CD4-positive, alpha-beta T cell (primary cell): ENCODE measurements at regions of chr19 and their contacts with region 1.

Region 1: DNA sequence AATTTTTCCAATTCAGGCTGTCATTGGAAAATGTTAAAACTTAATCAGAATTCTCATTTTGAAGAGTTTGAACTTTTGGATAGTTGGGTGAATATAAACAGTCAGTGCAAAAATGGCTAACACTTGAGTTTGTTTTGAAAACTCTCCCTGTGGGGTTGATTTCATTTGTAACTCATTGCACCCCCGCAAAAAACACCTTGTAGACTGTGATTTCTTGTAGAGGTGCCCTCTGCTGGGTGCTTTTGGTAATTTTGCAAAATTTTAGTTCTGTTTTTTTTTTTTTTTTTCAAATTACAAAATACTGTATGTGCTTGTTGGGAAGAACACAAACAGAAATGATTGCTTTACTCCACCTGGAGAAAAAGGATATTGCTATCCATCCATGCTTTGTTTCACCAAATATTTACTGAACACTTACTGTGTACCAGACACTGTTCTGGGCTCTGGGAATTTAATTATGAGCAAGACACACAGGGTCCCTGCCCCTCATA is 28.2 kb upstream of the GPI start:
- DNase-seq: peak in 12 of 14 experiments; percentile 16 to 79 (median 42)
- ATAC-seq: peak; percentile 76
- H3K4me3 ChIP-seq: no peak overlapping the region
- H3K4me3 Mint-ChIP-seq: no peak overlapping the region
- H3K27ac ChIP-seq: no peak overlapping the region
- H3K27ac Mint-ChIP-seq: peak overlapping the region; percentile 74
- H3K4me1 ChIP-seq: peaks cover 5% of the 10 kb centered on the region
- H3K4me1 Mint-ChIP-seq: peaks cover 13% of the 10 kb centered on the region
- H3K27me3 ChIP-seq: no peaks in the 10 kb centered on the region
- H3K27me3 Mint-ChIP-seq: no peaks in the 10 kb centered on the region
- CTCF ChIP-seq: peak; percentile 78

Region 2: DNA sequence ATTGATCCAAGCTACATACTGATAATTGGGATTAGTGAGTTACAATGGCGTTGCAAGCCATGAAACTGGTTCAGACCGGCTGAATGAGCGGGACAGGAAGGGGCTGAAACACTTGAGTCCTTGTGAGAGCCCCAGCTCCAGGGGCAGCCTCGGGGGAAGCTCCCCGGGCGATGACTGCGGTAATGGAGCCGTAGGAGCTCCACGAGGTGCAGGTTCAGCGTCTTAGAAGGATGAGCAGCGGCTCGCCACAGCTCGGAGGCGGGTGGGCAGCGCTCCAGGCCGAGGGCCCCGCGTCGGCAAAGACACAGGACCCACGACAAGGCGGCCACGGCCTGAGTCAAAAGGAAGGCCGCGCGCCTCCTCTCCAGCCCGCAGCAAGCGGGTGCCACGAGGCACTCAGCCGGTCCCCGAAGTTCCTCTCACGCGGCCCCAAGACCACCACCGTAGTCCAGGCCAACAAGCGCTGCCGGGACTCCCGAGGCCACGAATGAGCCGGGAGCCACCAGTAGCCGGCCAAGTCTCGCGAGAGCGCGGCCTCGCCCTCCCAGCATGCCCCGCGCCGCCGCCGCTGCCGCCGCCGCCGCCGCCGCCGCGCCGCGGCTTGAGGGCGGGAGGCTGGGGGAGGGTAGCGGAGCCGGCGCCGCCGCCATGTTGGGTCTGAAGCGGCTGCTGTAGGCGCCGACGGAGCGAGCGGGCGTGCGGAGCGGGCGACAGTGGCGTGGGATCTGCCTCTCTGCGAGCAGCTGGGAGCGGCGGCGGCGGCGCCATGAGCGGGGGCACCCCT is 164.8 kb before region 1 on chr19 and contains the start of gene LSM14A:
- CTCF ChIA-PET with region 1: no interaction called
- POLR2A ChIA-PET with region 1: interaction called, 11 read pairs
- intact Hi-C with region 1: loop called (anchors 2 to 5 kb)
- DNase-seq: peak; percentile 84 to 97 (median 91)
- ATAC-seq: peak; percentile 85
- H3K4me3 ChIP-seq: peak within 1 kb of the TSS; percentile 95
- H3K4me3 Mint-ChIP-seq: peak within 1 kb of the TSS; percentile 99
- H3K27ac ChIP-seq: peak within 1 kb of the TSS; percentile 97 to 98
- H3K27ac Mint-ChIP-seq: peak within 1 kb of the TSS; percentile 97
- H3K4me1 ChIP-seq: peaks cover 40% of the 10 kb centered on the region
- H3K4me1 Mint-ChIP-seq: peaks cover 50% of the 10 kb centered on the region
- H3K27me3 ChIP-seq: no peaks in the 10 kb centered on the region
- H3K27me3 Mint-ChIP-seq: no peaks in the 10 kb centered on the region
- CTCF ChIP-seq: no peak
- total RNA-seq, gene LSM14A: 210 to 217 TPM

Region 3: GRCh38 chr19:34220472-34221063 is 116.3 kb before region 1 on chr19:
- CTCF ChIA-PET with region 1: no interaction called
- POLR2A ChIA-PET with region 1: no interaction called
- intact Hi-C with region 1: loop called in 1 of 2 experiments (anchors 2 kb)
- DNase-seq: peak; percentile 38 to 79 (median 51)
- ATAC-seq: no peak
- H3K4me3 ChIP-seq: no peak overlapping the region
- H3K4me3 Mint-ChIP-seq: no peak overlapping the region
- H3K27ac ChIP-seq: no peak overlapping the region
- H3K27ac Mint-ChIP-seq: peak overlapping the region; percentile 28
- H3K4me1 ChIP-seq: peaks cover 39% of the 10 kb centered on the region
- H3K4me1 Mint-ChIP-seq: peaks cover 61% of the 10 kb centered on the region
- H3K27me3 ChIP-seq: no peaks in the 10 kb centered on the region
- H3K27me3 Mint-ChIP-seq: no peaks in the 10 kb centered on the region
- CTCF ChIP-seq: peak; percentile 74

Region 4: DNA sequence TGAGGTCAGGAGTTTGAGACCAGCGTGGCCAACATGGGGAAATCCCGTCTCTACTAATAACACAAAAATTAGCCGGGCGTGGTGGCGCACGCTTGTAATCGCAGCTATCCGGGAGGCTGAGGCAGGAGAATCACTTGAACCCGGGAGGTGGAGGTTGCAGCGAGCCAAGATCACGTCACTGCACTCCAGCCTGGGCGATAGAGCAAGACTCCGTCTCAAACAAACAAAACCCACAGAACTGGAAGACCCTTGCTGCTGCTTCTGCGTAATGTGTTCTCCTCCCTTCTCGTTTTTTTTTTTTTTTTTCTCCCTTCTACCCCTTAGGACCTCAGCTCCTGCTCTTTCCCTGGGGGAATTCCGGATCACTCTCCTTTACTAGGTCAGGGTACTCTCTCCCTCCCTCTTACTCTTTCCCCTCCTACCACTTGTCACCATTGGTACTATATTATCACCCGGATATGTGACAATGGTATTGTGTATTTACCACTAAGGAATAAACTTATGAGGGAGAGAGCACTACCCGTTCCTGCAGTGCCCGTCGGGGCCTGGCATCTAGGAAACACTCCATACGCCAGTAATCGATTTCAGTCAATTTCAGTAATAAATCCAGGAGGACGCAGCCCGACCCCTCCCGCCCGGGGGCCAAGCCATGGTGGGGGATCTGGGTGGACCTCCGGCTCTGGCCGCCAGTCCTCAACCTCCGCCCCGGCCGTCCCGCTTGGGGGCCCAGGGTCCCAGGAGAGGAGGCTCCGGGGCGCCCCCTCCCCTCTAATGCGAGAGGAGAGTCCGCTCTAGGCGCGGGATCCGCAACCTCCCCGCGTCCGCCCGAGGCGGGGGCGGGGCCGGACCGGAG is 82.9 kb before region 1 on chr19:
- CTCF ChIA-PET with region 1: no interaction called
- POLR2A ChIA-PET with region 1: no interaction called
- intact Hi-C with region 1: loop called (anchors 2 kb)
- DNase-seq: peak in 7 of 14 experiments; percentile 53 to 91 (median 78)
- ATAC-seq: peak; percentile 46
- H3K4me3 ChIP-seq: peak overlapping the region; percentile 76
- H3K4me3 Mint-ChIP-seq: peak overlapping the region; percentile 95
- H3K27ac ChIP-seq: peak overlapping the region; percentile 75 to 83
- H3K27ac Mint-ChIP-seq: peak overlapping the region; percentile 90
- H3K4me1 ChIP-seq: peaks cover 31% of the 10 kb centered on the region
- H3K4me1 Mint-ChIP-seq: peaks cover 44% of the 10 kb centered on the region
- H3K27me3 ChIP-seq: no peaks in the 10 kb centered on the region
- H3K27me3 Mint-ChIP-seq: no peaks in the 10 kb centered on the region
- CTCF ChIP-seq: no peak

Region 5: GRCh38 chr19:34298891-34299520 is 37.8 kb before region 1 on chr19:
- CTCF ChIA-PET with region 1: no interaction called
- POLR2A ChIA-PET with region 1: no interaction called
- intact Hi-C with region 1: loop called in 1 of 2 experiments (anchors 5 kb)
- DNase-seq: no peak
- ATAC-seq: no peak
- H3K4me3 ChIP-seq: no peak overlapping the region
- H3K4me3 Mint-ChIP-seq: no peak overlapping the region
- H3K27ac ChIP-seq: no peak overlapping the region
- H3K27ac Mint-ChIP-seq: peak overlapping the region; percentile 57
- H3K4me1 ChIP-seq: peaks cover 4% of the 10 kb centered on the region
- H3K4me1 Mint-ChIP-seq: peaks cover 43% of the 10 kb centered on the region
- H3K27me3 ChIP-seq: no peaks in the 10 kb centered on the region
- H3K27me3 Mint-ChIP-seq: no peaks in the 10 kb centered on the region
- CTCF ChIP-seq: no peak